ENCODE measurements at regions of chr1 and their contacts with region 1.

Region 1: GRCh38 chr1:175154629-175155472 is 37.7 kb downstream of the KIAA0040 start:
- DNase-seq: peak; percentile 62
- H3K4me3 ChIP-seq: no peak overlapping the region; a peak in 1 of 4 replicates
- H3K27ac ChIP-seq: no peak overlapping the region
- H3K4me1 ChIP-seq: no peaks in the 10 kb centered on the region
- H3K27me3 ChIP-seq: 0 out of 2 replicates have a peak, but pooled peaks cover 10% of the 10 kb centered on the region
- CTCF ChIP-seq: peak; percentile 86
- EP300 ChIP-seq: no peak
- RAD21 ChIP-seq: peak; percentile 87

Region 2: GRCh38 chr1:175035865-175036264 is 119.0 kb before region 1 on chr1:
- CTCF ChIA-PET with region 1: interaction called, 23 read pairs
- POLR2A ChIA-PET with region 1: no interaction called
- DNase-seq: no peak
- H3K4me3 ChIP-seq: no peak overlapping the region
- H3K27ac ChIP-seq: no peak overlapping the region
- H3K4me1 ChIP-seq: no peaks in the 10 kb centered on the region
- H3K27me3 ChIP-seq: no peaks in the 10 kb centered on the region
- CTCF ChIP-seq: no peak
- EP300 ChIP-seq: no peak
- RAD21 ChIP-seq: no peak

Region 3: DNA sequence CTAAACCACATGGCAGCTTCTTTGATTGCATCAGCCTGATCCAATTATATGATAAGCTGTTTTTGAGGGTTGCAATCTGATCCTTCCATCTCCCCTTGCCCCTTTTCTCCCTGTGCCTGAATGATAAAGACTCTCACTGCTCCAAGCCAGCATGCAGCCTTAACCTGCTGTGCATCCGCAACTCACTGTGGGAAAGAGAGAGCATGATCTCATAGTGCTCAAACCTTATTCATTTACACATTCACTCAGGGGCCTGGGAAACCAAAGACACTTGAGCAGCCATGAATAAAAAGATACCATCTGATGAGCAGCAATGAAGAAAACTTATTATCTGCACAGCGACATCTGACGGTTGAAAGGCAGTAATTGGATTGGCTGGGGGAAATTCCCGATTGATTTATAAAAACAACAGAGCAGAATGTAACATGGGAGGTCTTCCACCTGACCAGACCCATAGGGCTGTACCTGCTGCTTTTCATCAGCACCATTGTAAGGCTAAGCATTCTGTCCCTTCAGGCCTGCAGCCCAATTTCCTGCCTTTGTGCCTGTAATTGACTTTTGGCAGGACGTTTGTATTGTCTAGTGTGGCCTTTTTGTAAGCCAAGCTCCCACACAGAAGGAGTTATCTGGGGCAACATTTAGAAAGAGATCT is 24.7 kb before region 1 on chr1:
- CTCF ChIA-PET with region 1: interaction called, 21 read pairs
- POLR2A ChIA-PET with region 1: interaction called, 3 read pairs
- DNase-seq: peak; percentile 44
- H3K4me3 ChIP-seq: no peak overlapping the region
- H3K27ac ChIP-seq: peak overlapping the region in 1 of 2 experiments; percentile 60; a peak in 2 of 4 replicates
- H3K4me1 ChIP-seq: peaks cover 0 to 10% of the 10 kb centered on the region in 2 experiments; a peak in 1 of 4 replicates
- H3K27me3 ChIP-seq: no peaks in the 10 kb centered on the region
- CTCF ChIP-seq: no peak
- EP300 ChIP-seq: peak in 1 of 2 experiments; percentile 34; a peak in 1 of 4 replicates
- RAD21 ChIP-seq: no peak

Region 4: DNA sequence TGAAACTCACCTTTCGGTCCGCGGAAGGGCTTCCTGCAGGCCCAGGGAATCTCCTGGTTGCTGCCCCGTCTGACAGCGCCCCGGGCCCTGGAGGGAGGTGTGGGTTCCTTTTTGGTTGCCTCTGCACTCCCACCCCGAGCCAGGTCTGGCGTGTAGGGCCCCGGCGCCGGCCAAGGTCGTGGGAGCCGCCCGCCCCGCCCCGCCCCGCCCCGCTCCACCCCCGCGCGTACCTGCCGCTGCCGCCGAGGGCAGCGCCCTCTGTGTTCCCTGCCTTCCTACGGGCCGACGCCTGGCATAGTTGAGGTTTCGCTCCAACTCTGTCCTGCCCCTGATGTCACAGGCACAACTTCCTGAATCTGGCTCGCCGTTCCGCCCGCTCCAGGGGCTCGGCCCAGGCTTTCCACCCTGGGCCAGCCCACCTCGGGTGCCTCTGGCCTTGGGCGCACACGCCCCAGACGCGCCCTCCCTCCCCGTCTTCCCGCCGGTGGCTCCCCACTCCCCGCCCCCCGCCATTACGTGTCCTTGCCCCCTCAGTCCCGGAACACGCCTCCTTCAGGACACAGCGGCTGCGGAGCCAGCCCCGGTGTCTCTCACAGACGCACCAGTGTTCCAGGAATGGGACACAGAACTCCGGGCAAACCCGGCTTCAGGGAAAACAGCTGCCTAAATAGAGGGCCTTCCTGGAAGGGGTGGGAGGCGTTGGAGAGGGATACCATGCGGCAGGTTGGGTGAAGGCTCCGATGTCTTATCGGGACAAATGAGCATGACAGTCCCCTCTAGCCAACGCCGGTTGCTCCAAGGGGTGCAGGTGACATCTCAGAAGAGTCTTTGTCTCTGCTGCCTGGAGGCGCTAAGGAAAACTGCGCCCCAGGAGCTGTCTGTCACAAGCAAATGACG is 38.0 kb after region 1 on chr1 and contains the start of gene KIAA0040:
- CTCF ChIA-PET with region 1: interaction called, 13 read pairs
- POLR2A ChIA-PET with region 1: no interaction called
- DNase-seq: peak; percentile 86
- H3K4me3 ChIP-seq: peak within 1 kb of the TSS; percentile 44 to 46
- H3K27ac ChIP-seq: no peak within 1 kb of the TSS
- H3K4me1 ChIP-seq: peaks cover 0 to 10% of the 10 kb centered on the region in 2 experiments; a peak in 1 of 4 replicates
- H3K27me3 ChIP-seq: no peaks in the 10 kb centered on the region
- CTCF ChIP-seq: no peak
- EP300 ChIP-seq: no peak
- RAD21 ChIP-seq: no peak
- polyA plus RNA-seq, gene KIAA0040: 0.08 and 0.15 TPM in 2 replicates

Region 5: GRCh38 chr1:175319418-175320230 is 164.8 kb after region 1 on chr1:
- CTCF ChIA-PET with region 1: interaction called, 281 read pairs
- POLR2A ChIA-PET with region 1: no interaction called
- DNase-seq: peak; percentile 74
- H3K4me3 ChIP-seq: peak overlapping the region in 1 of 2 experiments; percentile 42; a peak in 1 of 4 replicates
- H3K27ac ChIP-seq: no peak overlapping the region
- H3K4me1 ChIP-seq: peaks cover 0 to 3% of the 10 kb centered on the region in 2 experiments; a peak in 1 of 4 replicates
- H3K27me3 ChIP-seq: no peaks in the 10 kb centered on the region
- CTCF ChIP-seq: peak; percentile 56
- EP300 ChIP-seq: no peak
- RAD21 ChIP-seq: peak; percentile 89

Region 6: GRCh38 chr1:176073524-176074157 is 918.8 kb after region 1 on chr1:
- CTCF ChIA-PET with region 1: interaction called, 10 read pairs
- POLR2A ChIA-PET with region 1: no interaction called
- DNase-seq: peak; percentile 57
- H3K4me3 ChIP-seq: no peak overlapping the region; a peak in 1 of 4 replicates
- H3K27ac ChIP-seq: no peak overlapping the region
- H3K4me1 ChIP-seq: no peaks in the 10 kb centered on the region; a peak in 1 of 4 replicates
- H3K27me3 ChIP-seq: no peaks in the 10 kb centered on the region
- CTCF ChIP-seq: peak; percentile 84
- EP300 ChIP-seq: no peak
- RAD21 ChIP-seq: peak; percentile 98

Measured in SK-N-SH (cell line).